ENCODE measurements at regions of chr12 and their contacts with region 1.

Region 1: DNA sequence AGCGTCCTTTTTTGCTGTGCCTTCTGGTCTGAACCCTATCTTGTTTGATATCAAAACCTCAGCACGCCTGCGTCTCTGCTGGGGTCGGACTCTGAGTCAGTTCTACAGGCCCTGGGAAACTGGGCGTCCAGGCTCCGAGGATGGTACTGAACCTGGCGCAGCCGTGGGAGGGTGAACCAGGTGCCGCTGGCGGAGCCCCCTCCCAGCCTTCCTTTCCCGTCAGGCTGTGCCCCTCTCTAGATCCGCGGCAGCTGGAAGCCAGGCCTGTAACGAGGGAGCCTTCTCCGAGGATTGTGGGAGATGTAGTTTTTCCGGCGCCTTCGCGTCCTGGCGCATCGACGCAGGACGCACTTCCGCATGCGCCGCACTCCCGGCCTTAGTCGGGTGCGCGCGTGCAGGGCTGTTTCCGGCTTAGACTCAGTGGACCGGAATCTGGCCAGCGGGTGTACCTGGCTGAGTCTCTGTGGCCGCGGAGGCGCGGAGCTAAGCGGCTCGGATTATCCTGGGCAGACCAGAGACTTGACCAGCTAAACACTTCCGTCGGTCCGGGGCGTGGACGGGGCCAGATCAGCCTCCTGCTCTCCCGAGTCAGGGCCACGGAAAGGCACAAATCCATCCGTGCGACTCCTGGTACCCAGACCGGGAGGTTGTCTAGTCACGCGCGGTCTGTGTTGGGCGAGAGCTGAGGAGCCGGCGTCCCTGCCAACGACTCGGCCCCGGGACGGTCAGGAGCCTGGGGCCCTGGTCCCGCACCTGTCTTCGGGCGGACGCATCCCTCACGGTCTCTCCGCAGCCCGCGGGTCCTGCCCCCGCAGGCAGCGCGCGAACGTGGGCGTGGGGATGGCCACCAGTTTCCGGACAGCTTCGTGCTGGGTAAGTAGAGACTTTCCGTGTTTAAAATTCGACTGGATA is at the start of gene ZNF26:
- DNase-seq: peak; percentile 91
- ATAC-seq: peak; percentile 97
- H3K4me3 ChIP-seq: peak within 1 kb of the TSS; percentile 83
- H3K27ac ChIP-seq: peak within 1 kb of the TSS; percentile 89
- H3K4me1 ChIP-seq: no peaks in the 10 kb centered on the region
- H3K27me3 ChIP-seq: no peaks in the 10 kb centered on the region
- CTCF ChIP-seq: no peak
- POLR2A ChIP-seq: peak; percentile 74
- RAD21 ChIP-seq: no peak
- total RNA-seq, gene ZNF26: 11.8 and 12.2 TPM in 2 replicates

Region 2: DNA sequence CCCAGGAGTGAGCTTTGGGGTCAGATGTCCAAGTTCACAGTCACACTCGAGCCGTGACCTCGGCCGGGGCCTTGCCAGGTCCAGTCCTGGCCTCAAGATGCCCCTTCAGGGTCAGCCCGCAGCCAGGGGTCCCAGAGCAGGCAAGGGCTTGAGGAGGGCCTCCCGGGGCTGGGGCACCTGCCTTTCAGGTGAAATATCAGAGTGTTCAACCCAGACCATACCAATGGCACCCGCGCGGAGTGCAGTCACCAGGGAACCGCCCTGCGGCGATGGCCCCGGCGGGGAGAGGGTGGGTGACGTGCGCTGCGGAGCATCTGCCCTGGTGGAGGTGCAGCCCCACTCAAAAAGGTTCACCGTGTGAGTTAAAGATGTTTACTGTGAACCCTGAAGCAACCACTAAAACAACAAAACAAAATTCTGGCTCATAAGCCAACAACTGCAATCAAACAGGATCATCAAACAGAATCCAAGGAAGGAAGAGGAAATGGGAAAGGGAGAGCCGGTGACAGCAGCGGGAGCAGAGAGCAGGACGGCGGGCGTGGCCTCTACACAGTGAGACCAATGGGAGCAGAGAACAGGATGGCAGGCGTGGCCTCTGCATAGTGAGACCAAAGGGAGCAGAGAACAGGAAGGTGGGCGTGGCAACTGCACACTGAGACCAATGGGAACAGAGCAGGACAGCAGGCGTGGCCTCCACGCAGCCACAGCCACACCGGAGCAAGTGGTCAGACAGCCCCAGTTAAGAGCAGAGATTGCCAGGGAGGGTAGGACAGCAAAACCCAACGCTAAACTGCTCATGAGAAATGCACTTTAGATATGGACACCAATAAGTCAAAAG is 392.5 kb before region 1 on chr12:
- CTCF ChIA-PET with region 1: no interaction called
- POLR2A ChIA-PET with region 1: no interaction called
- dilution Hi-C with region 1: no loop called
- in situ Hi-C with region 1: no loop called
- intact Hi-C with region 1: no loop called
- DNase-seq: peak; percentile 84
- ATAC-seq: peak; percentile 95
- H3K4me3 ChIP-seq: no peak overlapping the region
- H3K27ac ChIP-seq: no peak overlapping the region
- H3K4me1 ChIP-seq: peaks cover 4% of the 10 kb centered on the region; the same call in 1 of the 2 replicates
- H3K27me3 ChIP-seq: peaks cover 5% of the 10 kb centered on the region; the same call in 1 of the 2 replicates
- CTCF ChIP-seq: no peak
- POLR2A ChIP-seq: no peak
- RAD21 ChIP-seq: no peak

Region 3: GRCh38 chr12:132651444-132652100 is 334.7 kb before region 1 on chr12:
- CTCF ChIA-PET with region 1: no interaction called
- POLR2A ChIA-PET with region 1: no interaction called
- dilution Hi-C with region 1: no loop called
- in situ Hi-C with region 1: no loop called
- intact Hi-C with region 1: no loop called
- DNase-seq: no peak
- ATAC-seq: no peak
- H3K4me3 ChIP-seq: no peak overlapping the region
- H3K27ac ChIP-seq: no peak overlapping the region
- H3K4me1 ChIP-seq: no peaks in the 10 kb centered on the region
- H3K27me3 ChIP-seq: no peaks in the 10 kb centered on the region
- CTCF ChIP-seq: no peak
- POLR2A ChIP-seq: no peak
- RAD21 ChIP-seq: no peak

Region 4: GRCh38 chr12:133037207-133038005 is 51.1 kb after region 1 on chr12 and contains the start of gene ZNF84:
- CTCF ChIA-PET with region 1: no interaction called
- POLR2A ChIA-PET with region 1: no interaction called
- dilution Hi-C with region 1: no loop called
- in situ Hi-C with region 1: no loop called
- intact Hi-C with region 1: loop called (anchors 1 kb)
- DNase-seq: peak; percentile 98
- ATAC-seq: peak; percentile 96
- H3K4me3 ChIP-seq: peak within 1 kb of the TSS; percentile 52
- H3K27ac ChIP-seq: peak within 1 kb of the TSS; percentile 61
- H3K4me1 ChIP-seq: no peaks in the 10 kb centered on the region
- H3K27me3 ChIP-seq: no peaks in the 10 kb centered on the region
- CTCF ChIP-seq: no peak
- POLR2A ChIP-seq: peak; percentile 79
- RAD21 ChIP-seq: no peak
- total RNA-seq, gene ZNF84: 28.1 and 38.5 TPM in 2 replicates

Region 5: DNA sequence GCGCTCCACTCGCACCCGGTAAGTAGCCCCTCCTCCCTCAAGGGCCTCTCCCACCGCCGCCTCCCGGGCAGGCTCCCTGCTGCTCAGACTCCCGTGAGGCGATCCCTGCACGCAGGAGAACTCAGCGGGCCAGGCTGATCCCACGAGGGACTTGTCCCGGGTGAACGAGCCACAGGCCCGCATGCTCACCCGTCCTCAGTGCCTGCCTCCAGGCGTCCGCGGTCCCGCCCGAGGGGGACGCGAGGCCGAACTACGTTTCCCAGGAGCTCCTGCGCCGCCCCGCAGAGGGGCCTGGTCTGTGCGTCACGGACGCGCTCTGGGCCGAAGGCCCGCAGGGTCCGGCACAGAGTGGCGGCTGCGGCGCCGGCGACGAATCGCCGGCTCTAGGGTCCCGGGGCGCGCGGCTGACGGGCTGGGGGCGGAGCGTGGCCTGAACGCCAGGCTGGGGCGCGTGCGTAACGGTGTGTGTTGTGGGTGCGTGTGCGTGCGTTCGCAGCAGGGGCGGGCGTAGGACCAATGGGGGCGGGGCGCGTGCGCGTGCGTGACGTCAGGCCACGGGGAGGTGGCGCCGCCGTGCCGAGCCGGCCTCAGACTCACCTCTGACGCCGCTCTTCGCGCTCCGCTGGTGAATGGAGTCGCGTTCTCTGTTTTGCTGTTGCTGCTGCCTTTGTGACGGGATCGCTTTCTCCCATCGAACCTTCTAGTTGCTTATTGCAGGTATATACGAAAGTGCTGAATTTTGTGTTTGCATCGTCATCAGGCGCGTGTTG is 144.0 kb after region 1 on chr12 and contains the starts of genes ZNF10 and ZNF891:
- CTCF ChIA-PET with region 1: no interaction called
- POLR2A ChIA-PET with region 1: no interaction called
- dilution Hi-C with region 1: no loop called
- in situ Hi-C with region 1: no loop called
- intact Hi-C with region 1: loop called (anchors 2 kb)
- DNase-seq: peak; percentile 96
- ATAC-seq: peak; percentile 96
- H3K4me3 ChIP-seq: peak within 1 kb of the TSS; percentile 98
- H3K27ac ChIP-seq: peak within 1 kb of the TSS; percentile 93
- H3K4me1 ChIP-seq: no peaks in the 10 kb centered on the region
- H3K27me3 ChIP-seq: no peaks in the 10 kb centered on the region
- CTCF ChIP-seq: no peak
- POLR2A ChIP-seq: peak; percentile 96
- RAD21 ChIP-seq: peak; percentile 1; the same call in 1 of the 2 replicates
- total RNA-seq, gene ZNF10: 5.3 and 6.1 TPM in 2 replicates
- total RNA-seq, gene ZNF891: 0.36 and 0.56 TPM in 2 replicates